ENCODE measurements at regions of chr3 and their contacts with region 1.

Region 1: DNA sequence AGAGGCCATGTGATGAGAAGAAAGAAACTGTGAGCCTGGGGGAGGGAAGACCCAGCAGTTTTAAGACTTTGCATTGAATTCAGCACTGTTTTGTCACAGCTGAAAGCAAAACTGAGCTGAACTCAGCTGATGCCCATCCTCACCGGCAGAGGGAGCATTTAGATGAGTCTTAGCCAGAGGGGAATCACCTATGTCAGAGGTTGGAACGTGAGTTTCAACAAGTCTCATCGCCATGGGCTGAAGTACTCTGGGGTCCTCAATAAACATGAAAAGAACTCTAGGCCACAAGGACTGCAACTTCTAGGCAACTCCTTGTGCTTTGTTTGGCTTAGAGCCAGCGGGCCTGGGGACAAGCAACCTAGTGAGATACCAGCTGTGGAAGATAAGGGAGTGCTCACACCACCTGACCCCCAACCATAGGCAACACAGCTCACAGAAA is 324.5 kb downstream of the TBL1XR1 start:
- DNase-seq: peak; percentile 77
- H3K4me3 Mint-ChIP-seq: no peak overlapping the region
- H3K27ac Mint-ChIP-seq: no peak overlapping the region
- H3K4me1 Mint-ChIP-seq: peaks cover 3% of the 10 kb centered on the region
- H3K27me3 Mint-ChIP-seq: no peaks in the 10 kb centered on the region

Region 2: GRCh38 chr3:177378168-177378567 is 505.4 kb after region 1 on chr3:
- CTCF ChIA-PET with region 1: no interaction called
- intact Hi-C with region 1: loop called (anchors 5 kb)
- DNase-seq: no peak
- H3K4me3 Mint-ChIP-seq: no peak overlapping the region
- H3K27ac Mint-ChIP-seq: no peak overlapping the region
- H3K4me1 Mint-ChIP-seq: peaks cover 2% of the 10 kb centered on the region
- H3K27me3 Mint-ChIP-seq: no peaks in the 10 kb centered on the region

Region 3: DNA sequence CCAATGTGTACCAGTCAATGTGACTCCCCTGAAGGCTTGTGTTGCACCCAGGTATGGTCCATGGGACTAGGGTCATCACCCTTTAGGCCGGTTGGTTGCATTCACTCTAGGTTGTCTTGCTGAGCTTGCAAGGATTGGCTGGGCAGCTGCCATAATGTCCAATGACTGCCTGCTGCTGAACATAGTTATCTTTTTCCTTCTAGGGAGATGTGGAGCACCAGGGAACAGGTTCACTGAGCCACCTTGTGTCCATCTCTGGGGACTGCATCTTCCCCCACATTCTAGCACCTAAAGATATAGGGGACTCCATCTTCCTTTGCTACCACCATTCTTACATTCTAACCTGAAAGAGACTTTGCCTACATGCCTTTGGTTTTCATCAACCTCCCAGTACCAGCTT is 904.9 kb after region 1 on chr3:
- CTCF ChIA-PET with region 1: no interaction called
- intact Hi-C with region 1: loop called (anchors 5 kb)
- DNase-seq: peak; percentile 72
- H3K4me3 Mint-ChIP-seq: no peak overlapping the region
- H3K27ac Mint-ChIP-seq: no peak overlapping the region
- H3K4me1 Mint-ChIP-seq: peaks cover 11% of the 10 kb centered on the region
- H3K27me3 Mint-ChIP-seq: no peaks in the 10 kb centered on the region

Region 4: GRCh38 chr3:178385280-178385952 is 1512.6 kb after region 1 on chr3:
- CTCF ChIA-PET with region 1: interaction called, 8 read pairs
- intact Hi-C with region 1: loop called (anchors 1 kb)
- DNase-seq: peak; percentile 15
- H3K4me3 Mint-ChIP-seq: no peak overlapping the region
- H3K27ac Mint-ChIP-seq: no peak overlapping the region
- H3K4me1 Mint-ChIP-seq: no peaks in the 10 kb centered on the region
- H3K27me3 Mint-ChIP-seq: peaks cover 5% of the 10 kb centered on the region